GM13977 (cell line): ENCODE measurements at regions of chr14 and their contacts with region 1.

Region 1: DNA sequence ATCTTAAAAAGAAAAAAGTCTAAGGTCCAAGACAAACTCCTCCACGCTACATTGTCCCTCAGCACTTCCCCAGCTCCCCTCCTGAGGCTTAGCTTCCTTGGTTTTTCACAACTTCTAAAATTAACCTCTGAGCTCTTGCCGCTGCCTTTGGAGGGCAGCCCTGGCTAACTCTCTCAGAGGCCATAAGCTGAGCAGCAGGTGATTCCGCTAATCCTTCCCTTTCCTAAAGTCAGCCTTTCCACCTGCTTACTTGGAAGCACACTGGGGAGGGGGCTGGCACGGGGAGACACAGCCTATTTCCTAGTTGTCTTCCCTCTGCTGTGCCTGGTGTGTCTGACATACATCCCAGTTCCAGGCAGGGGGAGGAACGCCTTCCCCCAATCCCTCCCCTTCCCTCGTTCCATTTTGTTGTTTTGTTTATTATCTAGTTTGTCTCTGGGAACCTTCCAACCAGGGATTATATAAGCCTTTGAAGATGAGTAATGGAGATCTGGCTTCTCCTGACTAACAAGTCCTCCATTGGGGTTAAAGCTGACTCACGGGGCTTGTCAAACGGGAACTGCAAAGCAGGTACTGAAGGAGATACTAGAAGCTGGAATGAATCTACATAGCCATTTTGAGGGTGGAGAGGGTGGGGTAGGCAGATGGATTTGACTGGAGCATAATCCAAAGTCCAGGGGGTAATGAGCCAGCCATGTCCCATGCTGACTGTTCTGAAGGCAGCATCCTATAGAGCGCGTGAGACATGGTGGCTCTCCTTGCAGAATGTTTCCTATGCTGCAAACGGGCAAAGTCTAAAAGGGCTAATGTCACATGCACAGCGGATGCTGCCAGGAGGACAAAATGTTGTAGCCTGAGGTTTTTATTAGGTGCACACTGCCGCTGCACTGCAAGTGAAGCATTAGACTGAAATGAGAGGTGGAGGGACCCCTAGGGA is 230.8 kb downstream of the FOXN3 start:
- DNase-seq: no peak
- CTCF ChIP-seq: no peak

Region 2: GRCh38 chr14:89915114-89915878 is 729.1 kb after region 1 on chr14:
- in situ Hi-C with region 1: loop called (anchors 25 kb)
- DNase-seq: peak; percentile 58
- CTCF ChIP-seq: peak; percentile 83